Dorsolateral prefrontal cortex (tissue), 120 donors: ENCODE measurements at regions of chr19 and their contacts with region 1.

Region 1: DNA sequence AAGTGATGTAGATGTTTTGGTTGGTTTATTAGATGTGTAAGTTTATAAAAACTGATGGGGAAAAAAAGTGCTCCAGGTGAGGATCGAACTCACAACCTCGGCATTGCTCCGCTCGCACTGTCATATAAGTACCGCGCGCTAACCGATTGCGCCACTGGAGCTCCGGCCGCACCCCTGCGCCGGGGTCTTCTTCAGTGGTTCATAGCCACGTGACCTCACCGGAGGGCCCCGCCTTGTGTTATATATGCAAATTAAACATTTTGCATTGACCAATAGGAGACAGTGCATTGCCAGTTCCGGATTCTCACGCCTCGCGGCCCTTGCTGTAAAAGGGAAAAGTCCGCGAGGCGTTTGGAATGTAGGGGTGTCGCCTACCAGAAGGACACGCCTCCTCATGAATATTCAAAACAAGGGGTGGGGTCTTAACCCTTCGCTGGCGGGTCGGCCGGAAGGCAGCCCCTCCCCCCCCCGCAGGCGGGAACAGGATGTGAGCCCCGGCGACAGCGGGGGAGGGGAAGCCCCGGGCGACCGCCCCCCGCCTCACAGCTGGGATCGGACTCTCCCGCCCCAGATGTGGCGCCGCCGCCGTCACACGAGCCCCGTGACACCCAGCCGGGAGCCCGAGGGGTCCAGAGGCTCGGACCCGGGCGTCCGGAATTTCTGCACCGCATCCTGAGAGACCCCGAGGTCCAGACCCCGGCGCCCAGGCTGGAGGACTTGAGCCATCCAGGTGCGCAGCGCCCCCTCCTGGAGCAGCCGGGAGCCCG is at the start of gene PLEKHG2:
- DNase-seq: peak; percentile 91 to 99 (median 97)
- H3K4me3 ChIP-seq: peak within 1 kb of the TSS; percentile 60 to 96 (median 83)
- H3K27ac ChIP-seq: peak within 1 kb of the TSS; percentile 42 to 98 (median 93)
- H3K27me3 ChIP-seq: peaks cover 0 to 10% (median 0%) of the 10 kb centered on the region in 45 donors
- CTCF ChIP-seq: peak in 51 of 56 donors; percentile 4 to 90 (median 77)
- total RNA-seq, gene PLEKHG2: 2.1 to 25.5 (median 9.2) TPM

Region 2: DNA sequence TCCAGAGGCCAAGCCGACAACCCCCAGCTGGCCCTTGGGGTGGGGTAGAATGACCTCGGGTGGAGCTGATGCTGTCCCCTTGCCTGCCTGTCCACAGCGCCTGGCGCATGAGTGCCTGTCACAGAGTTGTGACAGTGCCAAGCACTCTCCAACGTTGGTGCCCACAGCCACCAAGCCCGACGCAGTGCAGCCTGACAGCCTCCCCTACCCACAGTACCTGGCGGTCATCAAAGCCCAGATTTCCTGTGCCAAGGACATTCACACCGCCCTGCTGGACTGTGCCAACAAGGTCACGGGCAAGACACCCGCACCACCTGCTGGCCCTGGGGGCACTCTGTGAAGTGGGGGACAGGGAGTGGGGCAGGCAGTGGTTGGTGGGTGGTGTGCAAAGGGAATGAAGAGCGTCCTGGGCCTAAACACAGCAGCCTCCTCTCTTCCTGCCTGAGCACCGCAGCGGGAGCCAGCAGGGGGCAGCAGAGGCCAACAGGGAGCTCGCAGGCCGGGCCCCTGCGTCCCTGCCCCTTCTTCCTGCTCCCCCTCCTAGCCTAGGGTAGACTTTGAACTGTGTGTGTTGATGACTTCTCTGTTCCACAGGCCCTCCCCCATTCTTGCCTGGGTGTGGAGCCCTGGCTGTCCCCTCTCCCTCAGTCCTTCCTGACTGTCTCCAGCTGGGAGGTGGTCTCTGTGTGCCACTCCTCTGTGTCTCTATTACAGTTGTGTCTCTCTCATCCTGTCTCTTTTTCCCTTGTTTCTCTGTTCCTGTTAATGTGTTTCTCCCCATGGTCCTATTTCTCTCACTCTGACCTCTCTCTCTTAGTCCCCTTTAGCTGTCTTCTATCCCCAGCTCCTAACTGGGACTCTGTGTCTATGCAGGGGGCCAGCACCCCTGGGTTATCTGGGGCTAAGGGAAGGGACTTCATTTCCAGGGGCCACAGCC is 14.7 kb before region 1 on chr19:
- intact Hi-C with region 1: loop called in 1 of 2 experiments (anchors 2 kb)
- DNase-seq: peak; percentile 67 to 87 (median 80)
- H3K4me3 ChIP-seq: peak overlapping the region in 12 of 59 donors; percentile 1 to 33 (median 12)
- H3K27ac ChIP-seq: peak overlapping the region in 58 of 59 donors; percentile 6 to 97 (median 82)
- H3K27me3 ChIP-seq: no peaks in the 10 kb centered on the region
- CTCF ChIP-seq: peak; percentile 86 to 99 (median 96)

Region 3: GRCh38 chr19:39539519-39540332 is 127.4 kb after region 1 on chr19 and contains the start of gene EID2:
- intact Hi-C with region 1: no loop called
- DNase-seq: peak; percentile 93 to 97 (median 94)
- H3K4me3 ChIP-seq: peak within 1 kb of the TSS; percentile 53 to 96 (median 83)
- H3K27ac ChIP-seq: peak within 1 kb of the TSS; percentile 75 to 99 (median 94)
- H3K27me3 ChIP-seq: no peaks in the 10 kb centered on the region
- CTCF ChIP-seq: peak; percentile 66 to 99 (median 96)
- total RNA-seq, gene EID2: 12.7 to 42.3 (median 28.5) TPM

Region 4: GRCh38 chr19:39602261-39602660 is 190.0 kb after region 1 on chr19 and contains the start of gene LGALS13:
- intact Hi-C with region 1: no loop called
- DNase-seq: no peak
- H3K4me3 ChIP-seq: no peak within 1 kb of the TSS
- H3K27ac ChIP-seq: no peak within 1 kb of the TSS
- H3K27me3 ChIP-seq: peaks cover 0 to 26% (median 3%) of the 10 kb centered on the region in 45 donors
- CTCF ChIP-seq: no peak
- total RNA-seq, gene LGALS13: 1.0 TPM in 1 of 120 experiments, not detected in the others